ENCODE measurements at regions of chr3 and their contacts with region 1.

Region 1: GRCh38 chr3:71064288-71064955 is 519.1 kb downstream of the FOXP1 start:
- DNase-seq: peak; percentile 71
- ATAC-seq: peak; percentile 17
- H3K4me3 Mint-ChIP-seq: no peak overlapping the region
- H3K27ac Mint-ChIP-seq: no peak overlapping the region
- H3K4me1 Mint-ChIP-seq: peaks cover 59% of the 10 kb centered on the region
- H3K27me3 Mint-ChIP-seq: no peaks in the 10 kb centered on the region
- CTCF ChIP-seq: no peak

Region 2: DNA sequence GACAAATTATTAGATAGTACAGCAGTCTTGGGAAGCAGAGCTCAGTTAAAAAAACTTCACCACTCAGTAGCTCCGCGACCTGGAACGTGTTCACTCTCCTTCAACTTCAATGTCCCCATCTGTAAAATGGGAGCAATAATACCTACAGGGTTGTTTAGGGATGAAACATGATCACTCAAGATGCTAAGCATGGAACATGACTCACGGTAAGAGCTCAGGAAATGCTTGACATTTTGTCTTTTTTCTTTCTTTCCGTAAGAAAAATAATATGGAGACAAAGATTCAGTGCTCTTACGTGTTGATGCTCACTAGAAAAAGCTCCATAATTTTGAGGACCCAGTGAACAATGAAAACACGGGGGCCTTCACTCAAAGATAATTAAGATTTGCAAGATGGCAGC is 145.3 kb before region 1 on chr3:
- CTCF ChIA-PET with region 1: no interaction called
- POLR2A ChIA-PET with region 1: no interaction called
- intact Hi-C with region 1: no loop called
- DNase-seq: no peak
- ATAC-seq: no peak
- H3K4me3 Mint-ChIP-seq: no peak overlapping the region
- H3K27ac Mint-ChIP-seq: no peak overlapping the region
- H3K4me1 Mint-ChIP-seq: no peaks in the 10 kb centered on the region
- H3K27me3 Mint-ChIP-seq: peaks cover 2% of the 10 kb centered on the region
- CTCF ChIP-seq: no peak

Region 3: GRCh38 chr3:71006810-71007785 is 57.3 kb before region 1 on chr3:
- CTCF ChIA-PET with region 1: interaction called, 13 read pairs
- POLR2A ChIA-PET with region 1: interaction called, 24 read pairs
- intact Hi-C with region 1: loop called (anchors 2 kb)
- DNase-seq: no peak
- ATAC-seq: no peak
- H3K4me3 Mint-ChIP-seq: no peak overlapping the region
- H3K27ac Mint-ChIP-seq: peak overlapping the region; percentile 93
- H3K4me1 Mint-ChIP-seq: peaks cover 73% of the 10 kb centered on the region
- H3K27me3 Mint-ChIP-seq: no peaks in the 10 kb centered on the region
- CTCF ChIP-seq: peak; percentile 63

Region 4: GRCh38 chr3:71080517-71081083 is 16.2 kb after region 1 on chr3:
- CTCF ChIA-PET with region 1: interaction called, 18 read pairs
- POLR2A ChIA-PET with region 1: interaction called, 17 read pairs
- intact Hi-C with region 1: loop called (anchors 2 kb)
- DNase-seq: no peak
- ATAC-seq: peak; percentile 28
- H3K4me3 Mint-ChIP-seq: peak overlapping the region; percentile 46
- H3K27ac Mint-ChIP-seq: peak overlapping the region; percentile 76
- H3K4me1 Mint-ChIP-seq: peaks cover 92% of the 10 kb centered on the region
- H3K27me3 Mint-ChIP-seq: no peaks in the 10 kb centered on the region
- CTCF ChIP-seq: no peak

Region 5: GRCh38 chr3:71130471-71131374 is 66.3 kb after region 1 on chr3:
- CTCF ChIA-PET with region 1: interaction called, 4 read pairs
- POLR2A ChIA-PET with region 1: interaction called, 68 read pairs
- intact Hi-C with region 1: loop called (anchors 5 kb)
- DNase-seq: peak; percentile 87
- ATAC-seq: peak; percentile 62
- H3K4me3 Mint-ChIP-seq: peak overlapping the region; percentile 77
- H3K27ac Mint-ChIP-seq: peak overlapping the region; percentile 93
- H3K4me1 Mint-ChIP-seq: peaks cover 68% of the 10 kb centered on the region
- H3K27me3 Mint-ChIP-seq: no peaks in the 10 kb centered on the region
- CTCF ChIP-seq: no peak

Region 6: DNA sequence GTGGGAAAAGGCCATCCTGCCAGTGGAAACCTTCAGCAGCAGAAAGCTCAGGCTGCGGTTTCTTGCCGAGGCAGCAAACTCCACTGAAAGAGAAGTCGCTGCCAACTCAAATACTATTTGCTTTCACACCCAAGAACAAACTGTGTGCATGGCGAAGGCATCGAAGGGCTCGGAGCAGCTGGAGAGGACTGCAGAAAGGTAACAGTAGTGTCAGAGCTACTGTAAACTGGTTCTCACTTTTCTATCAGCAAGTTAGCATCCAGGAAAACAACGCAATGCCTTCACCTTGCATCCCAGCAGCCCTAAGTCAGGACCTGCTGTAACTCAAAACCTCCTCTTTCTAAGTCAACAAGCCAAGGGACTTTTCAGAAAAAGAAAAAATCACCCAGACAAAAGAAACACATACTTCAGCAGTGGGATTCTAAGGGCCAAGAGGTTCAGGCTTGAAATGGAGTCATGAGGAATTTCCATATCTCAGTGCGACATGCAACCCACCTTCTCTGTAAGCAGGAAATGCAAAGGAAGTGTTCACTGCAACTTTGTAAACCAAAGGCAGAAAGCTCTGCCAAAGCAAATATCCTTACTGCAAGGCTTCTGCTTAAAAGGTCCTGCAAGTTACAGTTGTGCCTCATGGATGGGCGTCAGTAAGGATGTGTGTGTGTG is 325.6 kb after region 1 on chr3:
- CTCF ChIA-PET with region 1: no interaction called
- POLR2A ChIA-PET with region 1: interaction called, 8 read pairs
- intact Hi-C with region 1: loop called (anchors 10 kb)
- DNase-seq: peak; percentile 48
- ATAC-seq: peak; percentile 25
- H3K4me3 Mint-ChIP-seq: peak overlapping the region; percentile 72
- H3K27ac Mint-ChIP-seq: peak overlapping the region; percentile 94
- H3K4me1 Mint-ChIP-seq: peaks cover 72% of the 10 kb centered on the region
- H3K27me3 Mint-ChIP-seq: no peaks in the 10 kb centered on the region
- CTCF ChIP-seq: no peak